Testis (tissue), 5 donors: ENCODE measurements at regions of chr11 and their contacts with region 1.

Region 1: GRCh38 chr11:8384199-8384821 is 120.6 kb upstream of the LMO1 start:
- DNase-seq: peak; percentile 91
- H3K4me3 ChIP-seq: no peak overlapping the region
- H3K27ac ChIP-seq: peak overlapping the region; percentile 63 to 77
- H3K4me1 ChIP-seq: peaks cover 29% of the 10 kb centered on the region
- H3K27me3 ChIP-seq: no peaks in the 10 kb centered on the region
- CTCF ChIP-seq: peak; percentile 20 to 40 (median 33)
- POLR2A ChIP-seq: no peak

Region 2: GRCh38 chr11:7833527-7833926 is 550.8 kb before region 1 on chr11:
- intact Hi-C with region 1: no loop called
- DNase-seq: no peak
- H3K4me3 ChIP-seq: no peak overlapping the region
- H3K27ac ChIP-seq: no peak overlapping the region
- H3K4me1 ChIP-seq: no peaks in the 10 kb centered on the region
- H3K27me3 ChIP-seq: no peaks in the 10 kb centered on the region
- CTCF ChIP-seq: no peak
- POLR2A ChIP-seq: no peak

Region 3: DNA sequence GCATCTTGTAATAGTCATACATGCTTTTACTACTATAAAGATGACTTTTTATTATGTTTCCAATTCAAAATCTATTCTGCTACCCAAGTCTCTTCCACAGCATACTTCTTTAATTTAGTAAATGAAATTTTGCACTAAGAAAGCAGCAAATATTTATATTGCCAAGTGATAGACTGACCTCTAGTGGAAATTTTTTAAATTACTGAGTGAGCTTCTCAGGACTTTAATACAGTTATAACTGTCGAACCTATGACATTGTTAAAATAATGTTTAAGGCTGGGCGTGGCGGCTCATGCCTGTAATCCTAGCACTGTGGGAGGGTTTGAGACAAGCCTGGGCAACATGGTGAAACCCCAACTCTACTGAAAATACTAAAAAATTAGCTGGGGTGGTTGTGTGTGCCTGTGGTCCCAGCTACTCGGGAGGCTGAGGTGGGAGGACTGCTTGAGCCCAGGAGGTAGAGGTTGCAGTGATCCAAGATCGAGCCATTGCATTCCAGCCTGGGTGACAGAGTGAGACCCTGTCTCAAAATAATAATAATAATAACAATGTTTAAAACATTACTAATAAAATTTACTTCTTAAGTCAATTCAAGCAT is 182.4 kb after region 1 on chr11:
- intact Hi-C with region 1: loop called (anchors 10 kb)
- DNase-seq: no peak
- H3K4me3 ChIP-seq: no peak overlapping the region
- H3K27ac ChIP-seq: no peak overlapping the region
- H3K4me1 ChIP-seq: no peaks in the 10 kb centered on the region
- H3K27me3 ChIP-seq: no peaks in the 10 kb centered on the region
- CTCF ChIP-seq: peak; percentile 41 to 68 (median 44)
- POLR2A ChIP-seq: no peak

Region 4: GRCh38 chr11:8631395-8632118 is 247.2 kb after region 1 on chr11:
- intact Hi-C with region 1: no loop called
- DNase-seq: peak; percentile 57
- H3K4me3 ChIP-seq: no peak overlapping the region
- H3K27ac ChIP-seq: no peak overlapping the region
- H3K4me1 ChIP-seq: no peaks in the 10 kb centered on the region
- H3K27me3 ChIP-seq: no peaks in the 10 kb centered on the region
- CTCF ChIP-seq: no peak
- POLR2A ChIP-seq: no peak

Region 5: DNA sequence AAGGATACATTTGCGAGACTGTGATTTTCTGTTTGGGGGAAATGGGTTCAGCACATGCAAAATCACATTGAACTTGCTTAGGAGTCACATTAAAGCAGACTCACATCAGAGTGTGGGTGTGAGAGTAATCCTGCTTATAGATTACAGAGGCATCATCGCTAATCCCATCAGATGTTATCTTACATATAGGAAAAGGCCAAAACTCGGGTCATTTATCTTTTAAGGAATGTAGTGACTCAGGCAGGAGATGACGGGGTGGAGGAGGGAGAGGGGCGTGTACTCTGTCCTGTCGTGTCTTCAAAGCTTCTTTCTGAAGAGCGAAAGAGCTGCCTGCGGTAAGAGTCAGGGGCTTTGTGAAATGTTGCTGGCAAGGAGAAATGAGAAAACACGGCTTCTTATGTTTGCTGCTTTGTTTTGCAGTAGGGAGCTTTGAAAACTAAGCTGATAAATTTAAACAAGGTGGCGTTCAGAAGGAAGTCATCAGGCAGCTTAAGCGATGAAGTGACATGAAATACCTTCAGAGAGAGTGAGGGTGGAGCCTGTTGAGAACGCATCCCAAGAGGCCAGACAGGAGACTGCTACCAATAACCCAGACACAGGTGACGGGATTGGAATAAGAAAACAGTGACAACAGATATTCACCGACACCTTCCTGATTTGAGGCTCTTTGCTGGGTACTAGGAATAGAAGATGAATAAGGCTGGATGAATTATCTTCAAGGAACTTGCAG is 550.6 kb after region 1 on chr11:
- intact Hi-C with region 1: no loop called
- DNase-seq: no peak
- H3K4me3 ChIP-seq: no peak overlapping the region
- H3K27ac ChIP-seq: no peak overlapping the region
- H3K4me1 ChIP-seq: no peaks in the 10 kb centered on the region
- H3K27me3 ChIP-seq: no peaks in the 10 kb centered on the region
- CTCF ChIP-seq: no peak
- POLR2A ChIP-seq: no peak

Region 6: GRCh38 chr11:9716275-9717039 is 1332.1 kb after region 1 on chr11:
- intact Hi-C with region 1: no loop called
- DNase-seq: peak; percentile 27
- H3K4me3 ChIP-seq: no peak overlapping the region
- H3K27ac ChIP-seq: peak overlapping the region in 1 of 2 donors; percentile 53
- H3K4me1 ChIP-seq: peaks cover 14% of the 10 kb centered on the region
- H3K27me3 ChIP-seq: no peaks in the 10 kb centered on the region
- CTCF ChIP-seq: no peak
- POLR2A ChIP-seq: no peak